Activated CD4-positive, alpha-beta T cell treated with anti-CD3 and anti-CD28 coated beads, Interleukin-2, amount 10 ng/mL, durations not matched to agents 24 days and 14 days (primary cell): ENCODE measurements at regions of chr12 and their contacts with region 1.

Region 1: DNA sequence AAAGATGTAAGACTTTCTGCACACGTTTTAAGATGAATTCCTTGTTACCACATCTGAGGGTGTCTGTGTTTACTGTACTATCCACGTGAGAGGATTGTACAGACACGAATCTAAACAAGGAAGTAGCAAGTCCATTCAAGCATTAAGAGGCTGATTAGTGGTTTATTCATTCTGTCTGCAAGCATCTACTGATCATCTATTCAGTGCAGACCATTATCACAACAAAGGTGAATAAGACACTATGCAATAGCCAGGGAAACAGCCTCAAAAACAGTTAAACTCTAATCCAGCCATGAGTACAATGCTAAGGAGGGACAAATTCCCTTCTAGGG is 111.6 kb upstream of the PZP start:
- DNase-seq: no peak
- H3K4me3 Mint-ChIP-seq: no peak overlapping the region
- H3K27ac Mint-ChIP-seq: no peak overlapping the region
- H3K4me1 Mint-ChIP-seq: peaks cover 1% of the 10 kb centered on the region
- H3K27me3 Mint-ChIP-seq: no peaks in the 10 kb centered on the region

Region 2: GRCh38 chr12:8780389-8780788 is 539.4 kb before region 1 on chr12:
- intact Hi-C with region 1: no loop called
- DNase-seq: no peak
- H3K4me3 Mint-ChIP-seq: no peak overlapping the region
- H3K27ac Mint-ChIP-seq: no peak overlapping the region
- H3K4me1 Mint-ChIP-seq: no peaks in the 10 kb centered on the region
- H3K27me3 Mint-ChIP-seq: peaks cover 2% of the 10 kb centered on the region

Region 3: DNA sequence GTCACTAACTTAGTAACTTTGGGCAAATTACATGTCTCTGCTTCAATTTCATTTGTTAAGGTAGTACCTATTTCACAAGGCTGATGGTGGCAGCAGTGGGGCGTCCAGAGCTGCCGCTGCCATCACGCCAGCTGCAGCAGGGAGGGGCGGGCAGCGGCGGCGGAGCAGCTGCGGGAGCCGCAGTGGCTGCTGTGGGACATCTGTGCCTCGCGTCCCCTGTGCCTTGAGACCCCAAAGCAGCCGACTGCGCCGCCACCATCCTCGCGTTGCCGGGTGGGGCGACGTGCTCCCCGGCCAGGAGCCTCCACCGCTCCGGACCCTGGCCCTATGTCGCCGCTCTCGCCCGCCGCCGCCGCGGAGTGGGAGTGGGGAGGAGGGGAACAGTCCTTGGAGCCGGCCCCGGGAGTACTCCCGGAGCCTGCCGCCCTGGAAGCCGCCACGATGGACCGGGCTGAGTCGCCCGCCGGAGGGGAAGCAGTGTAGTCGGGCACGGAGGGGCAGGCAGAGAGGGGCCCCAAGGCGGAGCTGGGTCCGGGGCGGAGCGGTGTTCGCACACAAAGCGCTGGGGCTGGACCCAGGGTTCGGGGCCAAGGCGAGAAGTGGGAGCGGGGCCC is 255.5 kb before region 1 on chr12:
- intact Hi-C with region 1: loop called (anchors 10 kb)
- DNase-seq: peak; percentile 76
- H3K4me3 Mint-ChIP-seq: peak overlapping the region; percentile 79
- H3K27ac Mint-ChIP-seq: no peak overlapping the region
- H3K4me1 Mint-ChIP-seq: peaks cover 4% of the 10 kb centered on the region
- H3K27me3 Mint-ChIP-seq: peaks cover 28% of the 10 kb centered on the region

Region 4: GRCh38 chr12:9364224-9365176 is 44.7 kb after region 1 on chr12:
- intact Hi-C with region 1: no loop called
- DNase-seq: peak; percentile 81
- H3K4me3 Mint-ChIP-seq: peak overlapping the region; percentile 66
- H3K27ac Mint-ChIP-seq: peak overlapping the region; percentile 88
- H3K4me1 Mint-ChIP-seq: peaks cover 40% of the 10 kb centered on the region
- H3K27me3 Mint-ChIP-seq: peaks cover 33% of the 10 kb centered on the region